ENCODE measurements at regions of chr4 and their contacts with region 1.

Region 1: DNA sequence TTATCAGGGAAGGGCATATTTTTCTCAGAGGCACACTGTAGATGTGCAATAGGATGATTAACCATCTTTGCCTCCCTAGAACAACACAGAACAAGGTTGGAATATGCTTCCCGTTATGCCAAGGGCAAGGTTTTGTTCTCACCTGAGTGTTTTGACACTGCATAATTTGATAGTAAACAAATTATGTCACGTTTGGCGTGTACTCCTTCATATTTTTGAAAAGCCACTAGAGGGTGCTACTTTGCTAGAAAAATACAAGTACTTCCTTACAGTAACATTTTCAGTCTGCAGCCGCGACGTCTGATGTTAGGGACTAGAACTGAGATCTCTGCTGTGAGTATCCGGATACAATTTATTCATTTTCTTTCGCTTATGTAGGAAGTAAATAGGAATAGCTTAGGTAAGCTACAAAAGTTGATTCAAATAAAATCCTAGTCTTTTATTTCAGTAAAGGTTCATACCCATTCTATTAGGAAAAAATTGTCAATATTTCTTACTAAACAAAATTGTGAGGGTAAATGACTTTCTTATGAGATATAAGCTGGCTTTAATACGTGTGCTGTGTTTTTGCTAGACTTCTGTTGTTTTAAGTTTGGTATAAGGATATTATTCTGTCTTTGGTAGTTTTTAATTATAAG is 181.1 kb upstream of the WDFY3 start:
- DNase-seq: peak; percentile 27 to 65
- ATAC-seq: peak in 7 of 8 donors; percentile 54 to 86 (median 82)
- H3K4me3 ChIP-seq: peak overlapping the region in 7 of 10 donors; percentile 18 to 46 (median 28)
- H3K27ac ChIP-seq: peak overlapping the region in 3 of 10 donors; percentile 25 to 57 (median 27)
- H3K4me1 ChIP-seq: peaks cover 0 to 22% (median 11%) of the 10 kb centered on the region in 9 donors
- H3K27me3 ChIP-seq: no peaks in the 10 kb centered on the region
- CTCF ChIP-seq: peak; percentile 38 to 81 (median 72)

Region 2: GRCh38 chr4:85058551-85058950 is 89.0 kb before region 1 on chr4:
- intact Hi-C with region 1: no loop called
- DNase-seq: no peak
- ATAC-seq: no peak
- H3K4me3 ChIP-seq: no peak overlapping the region
- H3K27ac ChIP-seq: no peak overlapping the region
- H3K4me1 ChIP-seq: no peaks in the 10 kb centered on the region
- H3K27me3 ChIP-seq: peaks cover 0 to 7% (median 0%) of the 10 kb centered on the region in 7 donors
- CTCF ChIP-seq: no peak

Region 3: DNA sequence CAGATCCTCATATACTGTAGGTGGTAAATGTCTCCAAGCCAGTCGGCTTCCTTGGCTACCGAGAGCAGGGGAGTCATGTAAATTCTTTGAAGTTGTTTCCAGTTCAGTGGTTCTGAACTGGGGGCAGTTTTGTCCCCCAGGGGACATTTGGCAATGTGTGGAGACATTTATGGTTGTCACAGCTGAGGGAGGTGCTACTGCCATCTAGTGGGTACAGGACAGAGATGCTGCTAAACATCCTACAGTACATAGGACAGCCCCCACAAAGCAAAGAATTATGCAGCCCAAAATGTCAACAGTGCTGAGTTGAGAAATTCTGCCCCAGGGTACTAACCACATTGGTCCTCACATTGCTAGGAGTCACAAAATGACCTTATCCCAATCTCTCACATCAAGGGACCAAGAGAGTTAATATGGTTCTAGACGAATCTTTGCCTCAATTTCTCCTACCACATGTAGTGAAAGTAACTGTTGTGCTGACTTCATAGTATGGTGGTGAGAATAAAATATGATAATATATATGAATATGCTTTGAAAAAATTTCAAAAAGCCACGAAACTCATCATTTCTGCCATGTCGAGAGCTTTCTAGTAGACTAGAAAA is 223.0 kb after region 1 on chr4:
- intact Hi-C with region 1: loop called (anchors 2 to 10 kb)
- DNase-seq: peak in 1 of 2 donors; percentile 49
- ATAC-seq: peak in 7 of 8 donors; percentile 57 to 86 (median 67)
- H3K4me3 ChIP-seq: no peak overlapping the region
- H3K27ac ChIP-seq: no peak overlapping the region
- H3K4me1 ChIP-seq: peaks cover 0 to 32% (median 13%) of the 10 kb centered on the region in 9 donors
- H3K27me3 ChIP-seq: no peaks in the 10 kb centered on the region
- CTCF ChIP-seq: peak; percentile 46 to 79 (median 71)

Region 4: DNA sequence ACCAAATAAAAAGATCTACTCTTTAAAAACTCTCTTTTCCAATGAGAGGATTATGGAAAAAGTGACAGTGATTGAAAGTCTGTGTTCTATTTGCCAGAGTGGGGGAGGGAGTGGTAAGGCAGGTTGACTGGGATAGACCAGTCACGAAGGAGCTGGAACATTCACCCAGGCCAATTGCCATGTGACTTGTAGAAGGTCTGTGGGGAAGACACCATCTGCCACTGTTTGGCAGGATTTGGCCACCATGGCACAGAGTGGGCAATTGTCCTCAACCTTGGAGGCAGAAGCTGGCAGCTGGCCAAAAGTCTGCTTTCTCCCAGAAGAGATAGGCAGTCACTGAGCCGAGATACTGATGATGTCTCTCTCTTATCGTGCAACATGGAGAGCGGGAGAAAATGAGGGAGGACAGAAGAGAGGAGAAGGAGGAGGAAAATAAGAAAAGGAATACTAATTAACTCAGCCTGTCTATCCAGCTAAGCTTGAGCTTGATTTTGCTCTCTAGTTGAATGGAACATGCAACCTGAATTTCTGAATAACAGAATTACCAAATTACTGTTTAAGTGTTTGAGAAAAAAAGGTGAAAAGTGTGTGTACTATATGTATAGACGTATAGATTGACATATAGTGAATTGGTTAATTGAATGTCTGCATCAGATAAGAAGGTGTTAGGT is 594.5 kb after region 1 on chr4:
- intact Hi-C with region 1: loop called in 8 of 10 experiments (anchors 5 to 10 kb)
- DNase-seq: peak; percentile 36 to 39
- ATAC-seq: peak in 6 of 8 donors; percentile 34 to 82 (median 46)
- H3K4me3 ChIP-seq: no peak overlapping the region
- H3K27ac ChIP-seq: peak overlapping the region in 6 of 10 donors; percentile 15 to 89 (median 32)
- H3K4me1 ChIP-seq: peaks cover 0 to 62% (median 19%) of the 10 kb centered on the region in 9 donors
- H3K27me3 ChIP-seq: no peaks in the 10 kb centered on the region
- CTCF ChIP-seq: no peak

Region 5: DNA sequence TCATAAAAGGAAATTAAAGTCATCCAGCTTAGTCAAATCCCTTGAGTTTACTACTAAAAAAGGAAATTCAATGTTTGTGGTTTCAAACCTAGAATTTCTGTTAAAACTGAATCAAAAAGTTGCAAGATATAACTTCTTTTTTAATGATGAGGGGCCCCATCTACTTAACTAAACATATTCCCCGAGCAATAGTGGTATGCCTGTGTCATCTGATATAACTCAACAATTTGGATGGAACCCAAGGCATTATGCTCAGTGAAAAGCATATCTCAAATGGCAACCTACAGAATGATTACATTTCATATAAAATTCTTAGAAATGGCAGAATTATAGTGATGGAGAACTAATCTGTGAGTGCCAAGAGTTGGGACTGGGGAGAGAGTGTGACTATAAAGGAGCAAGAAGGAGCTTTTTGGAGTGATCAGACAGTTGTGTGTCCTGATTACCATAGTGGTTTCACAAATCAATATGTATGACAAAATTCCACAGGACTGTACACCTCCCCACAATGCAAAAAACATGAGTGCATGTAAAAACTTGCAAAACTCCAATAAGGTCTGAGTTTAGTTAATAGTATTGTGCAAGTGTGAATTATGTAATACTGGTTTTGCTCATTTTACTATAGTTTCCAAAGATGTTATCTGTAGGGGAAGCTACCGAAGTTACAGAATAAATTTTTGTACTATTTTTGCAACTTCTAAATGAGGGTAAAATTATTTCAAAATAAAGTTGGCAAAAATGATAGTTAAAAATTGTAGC is 650.6 kb after region 1 on chr4:
- intact Hi-C with region 1: loop called in 2 of 10 experiments (anchors 2 to 5 kb)
- DNase-seq: no peak
- ATAC-seq: peak in 1 of 8 donors; percentile 8
- H3K4me3 ChIP-seq: no peak overlapping the region
- H3K27ac ChIP-seq: no peak overlapping the region
- H3K4me1 ChIP-seq: peaks cover 1 to 29% (median 21%) of the 10 kb centered on the region in 9 donors
- H3K27me3 ChIP-seq: no peaks in the 10 kb centered on the region
- CTCF ChIP-seq: no peak

Measured in heart right ventricle (tissue), 16 donors.